ENCODE measurements at regions of chr2 and their contacts with region 1.

Region 1: GRCh38 chr2:203484266-203485112 is 50.6 kb downstream of the RAPH1 start:
- DNase-seq: peak; percentile 68
- H3K4me3 Mint-ChIP-seq: no peak overlapping the region
- H3K27ac Mint-ChIP-seq: no peak overlapping the region
- H3K4me1 Mint-ChIP-seq: peaks cover 9% of the 10 kb centered on the region
- H3K27me3 Mint-ChIP-seq: no peaks in the 10 kb centered on the region

Region 2: DNA sequence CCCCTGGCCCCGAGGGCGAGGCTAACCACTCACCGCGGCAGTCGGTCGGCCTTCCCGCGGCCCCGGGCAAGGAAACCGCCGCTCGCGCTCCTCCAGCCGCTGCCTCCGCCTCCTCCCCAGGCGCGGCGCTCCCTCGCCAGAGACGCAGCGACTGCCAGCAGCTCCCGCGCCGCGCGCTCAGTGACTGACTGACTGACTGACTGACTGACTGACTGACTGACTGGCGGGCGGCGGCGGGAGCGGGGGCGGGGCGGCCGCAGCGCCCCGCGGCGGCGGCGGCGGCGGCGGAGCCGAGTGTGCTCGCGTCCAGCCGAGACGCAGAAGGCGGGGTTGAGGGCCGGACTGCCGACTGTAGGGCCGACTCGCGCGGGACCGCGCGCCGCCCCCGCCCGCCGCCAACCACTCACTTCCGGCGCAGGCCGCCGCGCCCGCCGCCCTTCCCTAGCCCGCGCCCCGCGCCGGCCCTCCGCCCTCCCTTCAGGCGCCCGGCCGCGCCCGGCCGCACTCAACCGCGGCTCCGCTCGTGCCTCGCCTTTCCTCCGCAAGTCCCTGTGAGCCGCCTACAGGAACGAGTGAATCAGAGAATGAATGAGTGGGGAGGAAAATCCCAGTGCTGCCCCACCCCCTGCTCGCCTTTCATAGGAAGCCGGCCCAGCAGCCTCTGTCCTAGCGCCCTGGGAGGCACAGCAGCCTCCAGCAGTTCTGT is 50.7 kb after region 1 on chr2 and contains the start of gene RAPH1:
- CTCF ChIA-PET with region 1: no interaction called
- intact Hi-C with region 1: no loop called
- DNase-seq: peak; percentile 79
- H3K4me3 Mint-ChIP-seq: peak within 1 kb of the TSS; percentile 82
- H3K27ac Mint-ChIP-seq: peak within 1 kb of the TSS; percentile 61
- H3K4me1 Mint-ChIP-seq: peaks cover 21% of the 10 kb centered on the region
- H3K27me3 Mint-ChIP-seq: peaks cover 6% of the 10 kb centered on the region
- total RNA-seq, gene RAPH1: 8.6 to 11.9 TPM

Region 3: GRCh38 chr2:203578759-203579643 is 94.5 kb after region 1 on chr2:
- CTCF ChIA-PET with region 1: no interaction called
- intact Hi-C with region 1: loop called (anchors 5 kb)
- DNase-seq: peak; percentile 54
- H3K4me3 Mint-ChIP-seq: no peak overlapping the region
- H3K27ac Mint-ChIP-seq: no peak overlapping the region
- H3K4me1 Mint-ChIP-seq: peaks cover 14% of the 10 kb centered on the region
- H3K27me3 Mint-ChIP-seq: no peaks in the 10 kb centered on the region

Region 4: GRCh38 chr2:204187229-204188083 is 703.0 kb after region 1 on chr2:
- CTCF ChIA-PET with region 1: no interaction called
- intact Hi-C with region 1: no loop called
- DNase-seq: no peak
- H3K4me3 Mint-ChIP-seq: no peak overlapping the region
- H3K27ac Mint-ChIP-seq: no peak overlapping the region
- H3K4me1 Mint-ChIP-seq: peaks cover 13% of the 10 kb centered on the region
- H3K27me3 Mint-ChIP-seq: peaks cover 3% of the 10 kb centered on the region

Measured in activated naive CD4-positive, alpha-beta T cell treated with anti-CD3 and anti-CD28 coated beads for 36 hours (primary cell).